Panc1 (cell line): ENCODE measurements at regions of chr13 and their contacts with region 1.

Region 1: DNA sequence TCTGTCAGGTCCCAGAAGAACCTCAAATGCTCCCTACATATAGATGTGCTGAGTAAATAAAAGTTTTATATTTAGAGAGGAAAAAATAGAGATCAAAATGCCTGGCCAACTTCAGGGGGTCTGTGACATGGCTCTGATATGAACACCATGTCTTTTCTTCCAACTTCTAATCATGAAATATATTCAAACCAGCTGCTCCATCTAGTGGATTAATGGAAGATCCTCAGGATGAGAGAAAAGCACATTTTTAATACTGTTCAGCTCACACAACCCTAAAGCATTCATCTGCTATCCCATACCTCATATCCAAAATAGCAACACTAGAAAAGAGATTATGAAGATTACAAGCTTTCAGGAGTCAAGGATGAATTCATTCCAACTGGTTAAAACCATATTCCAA is 56.0 kb upstream of the DOCK9 start:
- DNase-seq: no peak
- ATAC-seq: peak; percentile 74; the same call in 1 of the 2 replicates
- H3K4me3 ChIP-seq: no peak overlapping the region
- H3K27ac ChIP-seq: no peak overlapping the region
- H3K4me1 ChIP-seq: no peaks in the 10 kb centered on the region; the same call in 1 of the 2 replicates
- H3K27me3 ChIP-seq: no peaks in the 10 kb centered on the region
- CTCF ChIP-seq: peak; percentile 37; the same call in 1 of the 2 replicates

Region 2: DNA sequence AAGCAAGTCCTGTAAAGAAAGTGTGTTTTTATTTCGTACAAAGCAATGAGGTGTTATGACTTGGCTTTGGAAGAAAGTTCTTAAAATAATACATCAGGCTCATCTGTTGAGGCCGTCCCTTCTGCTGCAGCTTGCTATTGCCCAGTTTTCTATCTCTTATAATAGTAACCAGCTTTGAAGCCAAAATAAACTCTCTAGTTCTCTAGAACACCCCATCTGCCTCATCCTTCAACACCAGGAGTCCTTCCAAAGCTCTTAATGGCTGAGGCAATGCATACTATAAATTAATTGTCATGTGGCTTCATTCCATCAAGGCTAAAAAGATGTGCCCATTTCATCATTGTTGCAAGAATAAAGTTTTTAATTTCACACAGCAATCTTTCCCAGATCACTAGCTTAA is 1129.8 kb before region 1 on chr13:
- CTCF ChIA-PET with region 1: no interaction called
- POLR2A ChIA-PET with region 1: no interaction called
- in situ Hi-C with region 1: no loop called
- intact Hi-C with region 1: no loop called
- DNase-seq: no peak
- ATAC-seq: no peak
- H3K4me3 ChIP-seq: no peak overlapping the region
- H3K27ac ChIP-seq: no peak overlapping the region
- H3K4me1 ChIP-seq: no peaks in the 10 kb centered on the region
- H3K27me3 ChIP-seq: no peaks in the 10 kb centered on the region
- CTCF ChIP-seq: no peak

Region 3: GRCh38 chr13:98869408-98870090 is 164.3 kb before region 1 on chr13:
- CTCF ChIA-PET with region 1: no interaction called
- POLR2A ChIA-PET with region 1: no interaction called
- in situ Hi-C with region 1: no loop called
- intact Hi-C with region 1: loop called (anchors 10 kb)
- DNase-seq: no peak
- ATAC-seq: no peak
- H3K4me3 ChIP-seq: no peak overlapping the region
- H3K27ac ChIP-seq: no peak overlapping the region
- H3K4me1 ChIP-seq: no peaks in the 10 kb centered on the region
- H3K27me3 ChIP-seq: no peaks in the 10 kb centered on the region
- CTCF ChIP-seq: peak; percentile 16; the same call in 1 of the 2 replicates